Gastrocnemius medialis (tissue), 4 donors: ENCODE measurements at regions of chrX and their contacts with region 1.

Region 1: DNA sequence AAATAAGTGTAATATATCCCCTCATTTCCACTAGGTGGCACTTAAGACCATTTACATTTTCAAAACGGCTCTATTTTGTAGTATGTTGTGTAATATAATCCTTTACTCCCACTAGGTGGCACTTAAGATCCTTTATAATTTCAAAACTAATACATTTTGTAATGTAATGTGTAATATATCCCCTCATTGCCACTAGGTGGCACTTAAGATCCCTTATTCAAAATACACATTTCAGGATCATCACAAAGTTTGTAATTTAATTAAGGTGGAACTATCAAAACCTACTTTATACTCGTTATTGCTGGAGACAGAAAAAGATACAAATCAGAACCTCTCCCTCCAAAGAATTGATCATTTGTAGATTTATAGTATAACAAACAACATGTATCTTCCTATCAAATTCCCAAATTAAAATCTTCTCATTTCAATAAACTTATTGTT is 132.5 kb downstream of the ARHGAP6 start:
- DNase-seq: no peak
- ATAC-seq: peak; percentile 89 to 96
- H3K4me3 ChIP-seq: no peak overlapping the region
- H3K27ac ChIP-seq: no peak overlapping the region
- H3K4me1 ChIP-seq: peaks cover 0 to 7% of the 10 kb centered on the region in 2 donors
- H3K27me3 ChIP-seq: no peaks in the 10 kb centered on the region
- CTCF ChIP-seq: peak; percentile 73 to 99 (median 85)
- POLR2A ChIP-seq: no peak

Region 2: DNA sequence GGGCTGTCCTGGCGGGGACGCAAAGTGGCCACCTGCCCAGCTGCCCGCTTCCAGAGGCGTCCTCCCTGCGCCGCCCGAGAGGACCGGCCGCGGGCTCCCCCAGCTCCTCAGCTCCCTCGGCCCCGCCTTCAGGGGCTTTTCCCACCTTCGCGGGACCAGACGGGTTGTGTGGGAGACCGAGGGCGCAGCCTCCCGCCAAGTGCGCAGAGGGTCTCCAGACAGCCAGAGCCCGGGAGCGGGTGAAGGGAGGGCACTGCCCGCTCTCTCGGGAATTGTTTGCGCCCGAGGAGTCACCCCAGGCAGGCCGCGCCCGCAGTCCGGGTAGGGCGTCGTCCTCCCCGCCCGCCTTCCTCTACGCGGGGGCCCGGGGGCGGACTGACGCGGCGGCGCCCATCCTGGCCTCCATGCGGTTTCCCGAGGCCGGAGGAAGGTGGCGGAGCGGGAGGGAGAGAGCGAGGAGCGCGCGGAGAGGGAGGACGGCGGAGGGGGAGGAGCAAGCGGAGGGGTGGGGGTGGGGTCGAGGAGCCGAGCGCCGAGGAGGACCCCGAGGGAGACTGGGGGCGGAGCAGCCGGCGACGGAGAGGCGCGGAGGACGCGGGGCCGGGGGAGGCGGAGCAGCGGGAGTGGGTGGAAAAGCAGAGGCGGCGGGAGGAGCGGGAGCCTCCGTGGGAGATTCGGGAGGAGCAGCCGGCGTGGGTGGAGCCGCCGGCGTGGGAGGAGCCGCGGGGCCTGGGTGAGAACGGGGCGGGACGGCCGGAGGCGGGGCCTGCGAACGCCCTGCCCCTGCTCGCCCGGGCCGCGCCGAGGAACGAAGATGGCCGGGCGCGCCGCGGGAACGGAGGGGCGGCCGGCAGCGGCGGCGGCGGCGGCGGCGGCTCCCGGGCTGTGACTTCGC is 1518.5 kb before region 1 on chrX:
- in situ Hi-C with region 1: no loop called
- intact Hi-C with region 1: loop called (anchors 10 kb)
- DNase-seq: peak; percentile 65 to 75
- ATAC-seq: peak; percentile 84 to 87
- H3K4me3 ChIP-seq: peak overlapping the region; percentile 45 to 78 (median 68)
- H3K27ac ChIP-seq: peak overlapping the region; percentile 81 to 86 (median 84)
- H3K4me1 ChIP-seq: no peaks in the 10 kb centered on the region
- H3K27me3 ChIP-seq: no peaks in the 10 kb centered on the region
- CTCF ChIP-seq: no peak
- POLR2A ChIP-seq: peak; percentile 63 to 68

Region 3: DNA sequence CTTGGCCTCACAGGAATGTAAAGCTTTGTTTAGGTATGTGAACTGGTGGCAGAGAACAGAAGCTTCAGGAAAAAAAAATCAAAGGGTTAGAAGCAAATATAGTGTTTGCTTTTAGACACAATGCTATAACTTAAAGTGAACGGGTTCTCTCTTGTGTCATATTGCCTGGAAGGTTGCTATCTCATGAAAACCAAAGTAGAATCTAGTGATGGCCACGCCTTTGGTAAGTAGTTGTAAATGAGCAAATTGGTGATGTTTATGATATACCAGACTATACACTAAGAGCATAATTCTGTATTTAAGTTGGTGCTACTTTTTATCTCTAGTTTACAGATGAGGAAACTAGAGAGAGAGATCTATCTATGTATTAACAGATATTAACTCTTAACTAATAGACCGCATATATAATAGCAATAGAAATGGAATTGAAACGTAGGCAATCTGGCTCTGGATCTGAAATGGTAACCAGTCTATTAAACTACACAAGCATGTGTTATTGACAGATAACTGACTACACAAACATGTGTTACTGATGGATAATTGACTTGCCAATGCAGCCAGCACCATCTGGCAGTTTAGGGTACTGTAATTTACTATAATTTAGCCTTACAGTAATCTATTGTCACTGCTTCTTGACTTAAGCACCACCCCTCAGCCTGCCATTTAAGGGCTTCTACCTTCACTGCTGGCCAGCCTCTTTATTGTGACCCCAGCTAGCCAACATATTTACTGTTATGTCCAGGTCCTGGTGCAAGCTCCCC is 381.3 kb before region 1 on chrX:
- in situ Hi-C with region 1: loop called in 2 of 4 experiments (anchors 5 to 10 kb)
- intact Hi-C with region 1: no loop called
- DNase-seq: no peak
- ATAC-seq: no peak
- H3K4me3 ChIP-seq: no peak overlapping the region
- H3K27ac ChIP-seq: no peak overlapping the region
- H3K4me1 ChIP-seq: no peaks in the 10 kb centered on the region
- H3K27me3 ChIP-seq: no peaks in the 10 kb centered on the region
- CTCF ChIP-seq: no peak
- POLR2A ChIP-seq: no peak

Region 4: GRCh38 chrX:11509786-11510185 is 23.4 kb before region 1 on chrX:
- in situ Hi-C with region 1: no loop called
- intact Hi-C with region 1: no loop called
- DNase-seq: no peak
- ATAC-seq: no peak
- H3K4me3 ChIP-seq: no peak overlapping the region
- H3K27ac ChIP-seq: no peak overlapping the region
- H3K4me1 ChIP-seq: no peaks in the 10 kb centered on the region
- H3K27me3 ChIP-seq: no peaks in the 10 kb centered on the region
- CTCF ChIP-seq: no peak
- POLR2A ChIP-seq: no peak

Region 5: DNA sequence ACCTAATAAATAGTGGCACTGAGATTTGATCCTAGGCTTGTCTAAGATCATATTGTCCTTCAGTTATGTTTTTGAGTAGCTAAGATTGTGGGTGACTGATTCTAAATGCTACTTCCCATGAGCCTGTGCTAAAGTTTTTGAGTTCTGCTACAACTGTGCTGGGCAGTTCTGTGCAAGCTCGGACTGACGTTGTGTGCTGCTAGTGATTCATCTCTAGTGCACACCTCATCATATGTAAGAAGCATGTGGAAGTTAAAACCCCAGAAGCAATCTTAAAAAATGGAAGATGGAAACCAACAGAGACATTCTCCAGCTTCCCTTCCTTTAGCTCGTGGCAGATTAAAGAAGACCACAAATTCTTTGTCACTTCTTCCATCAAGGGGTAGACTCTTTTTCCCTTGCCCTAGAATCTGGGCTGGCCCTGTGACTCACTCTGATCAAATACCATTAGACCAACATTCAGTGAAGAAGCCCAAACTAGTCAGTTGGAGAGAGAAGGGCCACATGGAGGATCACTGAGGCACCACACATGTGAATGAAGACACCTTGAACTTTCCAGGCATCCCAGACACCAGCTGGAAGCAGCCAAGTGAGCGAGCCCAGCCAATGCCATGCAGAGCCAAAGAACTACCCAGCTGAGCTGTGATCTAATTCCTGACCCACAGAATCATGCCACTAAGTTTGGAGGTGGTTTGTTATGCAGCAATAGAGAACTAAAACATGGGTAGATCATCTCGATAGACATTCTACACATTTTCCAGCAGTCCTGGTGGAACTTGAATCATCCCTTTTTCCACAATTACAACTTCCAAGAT is 115.7 kb after region 1 on chrX:
- in situ Hi-C with region 1: no loop called
- intact Hi-C with region 1: loop called (anchors 5 kb)
- DNase-seq: peak in 1 of 2 donors; percentile 31
- ATAC-seq: peak; percentile 88 to 91
- H3K4me3 ChIP-seq: no peak overlapping the region
- H3K27ac ChIP-seq: peak overlapping the region; percentile 34 to 64 (median 50)
- H3K4me1 ChIP-seq: peaks cover 3 to 10% of the 10 kb centered on the region in 2 donors
- H3K27me3 ChIP-seq: no peaks in the 10 kb centered on the region
- CTCF ChIP-seq: no peak
- POLR2A ChIP-seq: no peak

Region 6: DNA sequence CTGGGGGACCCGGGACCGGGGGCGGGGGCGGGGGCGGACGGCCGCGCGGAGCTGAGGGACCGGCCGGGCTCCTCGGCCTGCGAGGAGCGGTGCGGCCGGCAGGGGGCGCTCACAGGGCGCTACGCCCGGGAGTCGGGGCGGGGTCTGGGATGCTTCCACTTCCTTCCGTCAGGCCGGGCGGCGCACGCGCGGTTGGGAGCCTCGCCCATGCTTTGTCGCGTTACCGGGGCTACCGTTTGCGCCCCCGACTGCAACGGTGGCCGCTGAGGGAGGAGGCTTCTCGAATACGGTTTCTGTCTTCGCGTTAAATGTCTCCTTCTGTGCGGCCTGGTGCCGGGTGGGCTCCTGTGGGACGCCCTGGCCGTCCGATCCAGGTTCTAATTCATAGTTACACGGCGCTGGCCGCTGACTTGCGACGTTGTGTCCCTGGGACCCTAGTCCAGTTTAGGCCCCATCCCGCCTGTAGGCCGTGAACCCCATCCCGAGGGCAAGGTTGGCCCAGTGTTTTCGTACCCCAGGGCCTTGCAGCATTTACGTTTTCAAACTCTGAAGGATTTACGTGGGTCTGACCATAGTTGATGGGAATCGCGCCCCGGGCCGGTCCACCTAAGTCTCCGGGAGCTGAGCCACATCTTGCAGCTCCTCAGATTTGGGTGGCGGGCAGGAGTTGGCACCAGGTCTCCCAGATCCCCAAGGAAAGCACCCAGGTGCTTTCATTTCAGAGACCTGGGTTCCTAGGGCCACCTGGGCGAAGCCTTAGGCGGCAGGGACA is 225.4 kb after region 1 on chrX:
- in situ Hi-C with region 1: loop called in 1 of 4 experiments (anchors 25 kb)
- intact Hi-C with region 1: loop called (anchors 1 kb)
- DNase-seq: peak; percentile 64 to 78
- ATAC-seq: peak; percentile 67 to 76
- H3K4me3 ChIP-seq: peak overlapping the region; percentile 71 to 82 (median 77)
- H3K27ac ChIP-seq: peak overlapping the region; percentile 83 to 92 (median 90)
- H3K4me1 ChIP-seq: peaks cover 0 to 3% of the 10 kb centered on the region in 2 donors
- H3K27me3 ChIP-seq: no peaks in the 10 kb centered on the region
- CTCF ChIP-seq: peak; percentile 23 to 91 (median 72)
- POLR2A ChIP-seq: no peak